Activated CD4-positive, alpha-beta T cell treated with anti-CD3 and anti-CD28 coated beads, Interleukin-2, amount 10 ng/mL, durations not matched to agents 24 days and 14 days (primary cell): ENCODE measurements at regions of chr7 and their contacts with region 1.

Region 1: GRCh38 chr7:26291699-26292538 is at the start of gene SNX10:
- DNase-seq: peak; percentile 92
- H3K4me3 Mint-ChIP-seq: peak within 1 kb of the TSS; percentile 98
- H3K27ac Mint-ChIP-seq: peak within 1 kb of the TSS; percentile 91
- H3K4me1 Mint-ChIP-seq: peaks cover 32% of the 10 kb centered on the region
- H3K27me3 Mint-ChIP-seq: peaks cover 4% of the 10 kb centered on the region
- total RNA-seq, gene SNX10: 40.1 and 42.1 TPM in 2 replicates

Region 2: GRCh38 chr7:26090927-26091519 is 200.9 kb before region 1 on chr7:
- intact Hi-C with region 1: loop called (anchors 5 kb)
- DNase-seq: peak; percentile 75
- H3K4me3 Mint-ChIP-seq: peak overlapping the region; percentile 26
- H3K27ac Mint-ChIP-seq: peak overlapping the region; percentile 16
- H3K4me1 Mint-ChIP-seq: peaks cover 19% of the 10 kb centered on the region
- H3K27me3 Mint-ChIP-seq: peaks cover 3% of the 10 kb centered on the region

Region 3: GRCh38 chr7:26200444-26201246 is 91.3 kb before region 1 on chr7 and contains the start of gene HNRNPA2B1:
- intact Hi-C with region 1: loop called (anchors 1 kb)
- DNase-seq: peak; percentile 100
- H3K4me3 Mint-ChIP-seq: peak within 1 kb of the TSS; percentile 100
- H3K27ac Mint-ChIP-seq: peak within 1 kb of the TSS; percentile 99
- H3K4me1 Mint-ChIP-seq: peaks cover 51% of the 10 kb centered on the region
- H3K27me3 Mint-ChIP-seq: peaks cover 7% of the 10 kb centered on the region
- total RNA-seq, gene HNRNPA2B1: 862 and 873 TPM in 2 replicates

Region 4: GRCh38 chr7:26278770-26279169 is 13.1 kb before region 1 on chr7:
- intact Hi-C with region 1: loop called (anchors 1 kb)
- DNase-seq: no peak
- H3K4me3 Mint-ChIP-seq: peak overlapping the region; percentile 35
- H3K27ac Mint-ChIP-seq: no peak overlapping the region
- H3K4me1 Mint-ChIP-seq: peaks cover 17% of the 10 kb centered on the region
- H3K27me3 Mint-ChIP-seq: peaks cover 3% of the 10 kb centered on the region

Region 5: GRCh38 chr7:26305463-26306273 is 13.7 kb after region 1 on chr7:
- intact Hi-C with region 1: loop called (anchors 1 kb)
- DNase-seq: peak; percentile 79
- H3K4me3 Mint-ChIP-seq: peak overlapping the region; percentile 75
- H3K27ac Mint-ChIP-seq: peak overlapping the region; percentile 83
- H3K4me1 Mint-ChIP-seq: peaks cover 24% of the 10 kb centered on the region
- H3K27me3 Mint-ChIP-seq: no peaks in the 10 kb centered on the region

Region 6: GRCh38 chr7:26337232-26337865 is 45.4 kb after region 1 on chr7:
- intact Hi-C with region 1: loop called (anchors 5 kb)
- DNase-seq: no peak
- H3K4me3 Mint-ChIP-seq: no peak overlapping the region
- H3K27ac Mint-ChIP-seq: no peak overlapping the region
- H3K4me1 Mint-ChIP-seq: peaks cover 26% of the 10 kb centered on the region
- H3K27me3 Mint-ChIP-seq: no peaks in the 10 kb centered on the region

Region 7: DNA sequence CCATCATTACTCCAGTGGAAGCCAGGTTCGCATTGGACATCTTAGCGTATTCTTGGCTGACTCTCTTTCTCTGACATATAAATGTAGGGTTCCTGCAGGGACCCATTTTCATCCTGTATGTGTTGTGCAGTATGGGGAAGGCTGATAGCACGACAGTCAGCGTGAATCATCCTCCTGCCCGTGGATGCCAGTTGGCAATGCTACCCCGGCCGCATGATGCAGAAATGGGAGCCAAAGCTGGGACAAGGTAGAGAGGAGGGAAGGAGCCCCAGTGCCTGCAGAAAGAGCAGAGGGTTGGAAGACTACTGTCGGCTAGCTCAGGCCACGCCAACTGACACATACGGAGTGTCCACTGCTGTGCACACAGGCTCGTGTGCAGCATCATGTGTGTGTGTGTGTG is 320.8 kb after region 1 on chr7:
- intact Hi-C with region 1: no loop called
- DNase-seq: no peak
- H3K4me3 Mint-ChIP-seq: no peak overlapping the region
- H3K27ac Mint-ChIP-seq: no peak overlapping the region
- H3K4me1 Mint-ChIP-seq: no peaks in the 10 kb centered on the region
- H3K27me3 Mint-ChIP-seq: peaks cover 7% of the 10 kb centered on the region